ENCODE measurements at regions of chr5 and their contacts with region 1.

Region 1: GRCh38 chr5:138077065-138077696 is 6.7 kb upstream of the WNT8A start:
- DNase-seq: peak; percentile 73 to 78
- ATAC-seq: peak; percentile 89 to 92
- H3K4me3 ChIP-seq: no peak overlapping the region
- H3K27ac ChIP-seq: no peak overlapping the region
- H3K4me1 ChIP-seq: no peaks in the 10 kb centered on the region
- CTCF ChIP-seq: peak; percentile 94
- EP300 ChIP-seq: no peak
- POLR2A ChIP-seq: no peak
- RAD21 ChIP-seq: peak; percentile 89 to 93

Region 2: DNA sequence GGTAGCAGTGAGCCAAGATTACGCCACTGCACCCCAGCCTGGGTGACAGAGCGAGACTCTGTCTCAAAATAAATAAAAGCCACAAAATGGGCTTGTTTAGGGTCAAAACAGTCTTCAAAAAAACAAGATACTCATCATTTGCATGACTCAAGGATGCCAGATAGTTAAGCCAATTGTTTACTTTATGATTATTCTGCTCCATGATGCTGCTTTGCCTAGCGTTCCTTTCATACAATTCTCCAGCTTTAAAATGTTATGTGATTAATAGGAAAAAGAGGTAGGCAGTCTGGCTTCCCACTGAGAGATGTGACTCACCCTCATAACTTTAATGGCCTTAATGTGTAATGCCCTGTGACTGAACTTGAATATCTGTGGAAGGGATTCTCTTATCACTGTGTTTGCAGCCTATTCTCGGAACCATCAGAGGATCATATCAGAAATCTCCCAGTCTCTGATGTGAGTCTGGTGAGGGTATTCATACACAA is 1347.2 kb before region 1 on chr5:
- CTCF ChIA-PET with region 1: no interaction called
- POLR2A ChIA-PET with region 1: no interaction called
- DNase-seq: peak; percentile 28 to 75
- ATAC-seq: peak; percentile 86 to 88
- H3K4me3 ChIP-seq: no peak overlapping the region
- H3K27ac ChIP-seq: peak overlapping the region in 1 of 2 experiments; percentile 68; a peak in 4 of 6 replicates
- H3K4me1 ChIP-seq: peaks cover 23% of the 10 kb centered on the region; the same call in 2 of the 3 replicates
- CTCF ChIP-seq: no peak
- EP300 ChIP-seq: no peak; a peak in 1 of 5 replicates
- POLR2A ChIP-seq: no peak
- RAD21 ChIP-seq: 0 out of 5 replicates have a peak, but pooled peaks of 1 of the 2 experiments have one; percentile 8

Region 3: GRCh38 chr5:137901011-137901817 is 176.0 kb before region 1 on chr5:
- CTCF ChIA-PET with region 1: no interaction called
- POLR2A ChIA-PET with region 1: no interaction called
- DNase-seq: no peak
- ATAC-seq: no peak
- H3K4me3 ChIP-seq: no peak overlapping the region
- H3K27ac ChIP-seq: no peak overlapping the region
- H3K4me1 ChIP-seq: no peaks in the 10 kb centered on the region
- CTCF ChIP-seq: no peak
- EP300 ChIP-seq: no peak
- POLR2A ChIP-seq: no peak
- RAD21 ChIP-seq: no peak

Region 4: DNA sequence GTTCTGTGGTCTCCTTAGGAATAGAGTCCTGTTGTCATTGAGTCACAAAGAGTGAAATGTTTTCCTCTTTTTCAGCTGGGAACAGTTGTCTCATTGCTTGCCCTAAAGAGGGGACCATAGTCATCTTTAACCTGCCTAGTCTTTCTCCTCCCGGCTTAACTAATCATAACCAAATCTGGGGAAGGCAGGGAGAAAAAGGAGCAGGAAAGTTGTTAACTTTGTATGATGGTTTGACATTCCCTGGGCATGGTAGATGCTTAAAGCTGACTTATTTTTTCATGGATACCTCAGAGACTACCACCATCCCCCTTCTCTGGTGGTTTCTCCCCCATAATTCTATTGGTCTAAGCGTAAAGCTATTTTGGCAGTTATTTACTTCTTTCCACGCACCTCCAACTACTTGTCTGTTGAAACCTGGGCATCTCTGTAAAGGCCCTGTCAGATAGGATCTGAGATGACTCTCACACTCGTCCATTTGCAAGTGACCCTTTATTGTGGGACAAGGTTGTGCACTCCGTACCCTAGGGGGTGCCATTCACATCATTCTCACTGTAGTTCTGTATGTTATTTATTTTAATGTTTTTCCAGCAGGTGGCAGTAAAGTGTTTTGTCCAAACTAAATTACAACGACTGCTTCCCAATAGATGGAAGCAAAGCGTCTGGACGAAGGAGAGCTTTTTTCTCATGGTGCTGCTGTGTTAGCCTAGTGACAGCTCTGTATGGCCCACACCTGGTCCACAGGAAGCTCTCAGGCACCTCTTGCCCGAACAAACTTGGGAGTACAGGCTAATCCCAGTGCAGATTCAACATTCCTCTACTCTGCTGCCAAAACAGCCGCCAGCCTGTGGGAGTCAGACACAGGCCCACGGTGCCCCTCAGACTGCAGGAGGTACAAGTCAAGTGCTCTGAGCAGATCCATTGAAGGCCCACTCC is 41.3 kb before region 1 on chr5:
- CTCF ChIA-PET with region 1: interaction called, 20 read pairs
- POLR2A ChIA-PET with region 1: no interaction called
- DNase-seq: peak; percentile 69 to 93
- ATAC-seq: peak; percentile 71 to 79
- H3K4me3 ChIP-seq: no peak overlapping the region
- H3K27ac ChIP-seq: peak overlapping the region; percentile 44 to 65; a peak in 5 of 6 replicates
- H3K4me1 ChIP-seq: peaks cover 17% of the 10 kb centered on the region
- CTCF ChIP-seq: peak; percentile 99
- EP300 ChIP-seq: no peak
- POLR2A ChIP-seq: no peak
- RAD21 ChIP-seq: peak; percentile 84

Region 5: GRCh38 chr5:138096363-138096762 is 19.2 kb after region 1 on chr5:
- CTCF ChIA-PET with region 1: interaction called, 84 read pairs
- POLR2A ChIA-PET with region 1: no interaction called
- DNase-seq: no peak
- ATAC-seq: no peak
- H3K4me3 ChIP-seq: no peak overlapping the region
- H3K27ac ChIP-seq: no peak overlapping the region
- H3K4me1 ChIP-seq: no peaks in the 10 kb centered on the region
- CTCF ChIP-seq: no peak
- EP300 ChIP-seq: no peak
- POLR2A ChIP-seq: no peak
- RAD21 ChIP-seq: no peak

Region 6: GRCh38 chr5:138128334-138128733 is 51.2 kb after region 1 on chr5:
- CTCF ChIA-PET with region 1: interaction called, 291 read pairs
- POLR2A ChIA-PET with region 1: interaction called, 5 read pairs
- DNase-seq: no peak
- ATAC-seq: no peak
- H3K4me3 ChIP-seq: no peak overlapping the region
- H3K27ac ChIP-seq: no peak overlapping the region
- H3K4me1 ChIP-seq: 0 out of 3 replicates have a peak, but pooled peaks cover 4% of the 10 kb centered on the region
- CTCF ChIP-seq: no peak
- EP300 ChIP-seq: no peak
- POLR2A ChIP-seq: no peak
- RAD21 ChIP-seq: no peak

Region 7: GRCh38 chr5:138170299-138170698 is 93.1 kb after region 1 on chr5:
- CTCF ChIA-PET with region 1: interaction called, 10 read pairs
- POLR2A ChIA-PET with region 1: no interaction called
- DNase-seq: no peak
- ATAC-seq: no peak
- H3K4me3 ChIP-seq: no peak overlapping the region
- H3K27ac ChIP-seq: no peak overlapping the region
- H3K4me1 ChIP-seq: no peaks in the 10 kb centered on the region
- CTCF ChIP-seq: no peak
- EP300 ChIP-seq: no peak
- POLR2A ChIP-seq: no peak
- RAD21 ChIP-seq: no peak

Region 8: GRCh38 chr5:139273572-139274289 is 1196.5 kb after region 1 on chr5:
- CTCF ChIA-PET with region 1: no interaction called
- POLR2A ChIA-PET with region 1: no interaction called
- DNase-seq: peak; percentile 89 to 93
- ATAC-seq: peak; percentile 92 to 94
- H3K4me3 ChIP-seq: peak overlapping the region; percentile 80
- H3K27ac ChIP-seq: peak overlapping the region; percentile 94 to 97
- H3K4me1 ChIP-seq: peaks cover 62% of the 10 kb centered on the region
- CTCF ChIP-seq: no peak
- EP300 ChIP-seq: no peak
- POLR2A ChIP-seq: peak; percentile 92
- RAD21 ChIP-seq: no peak